ENCODE measurements at regions of chr4 and their contacts with region 1.

Region 1: DNA sequence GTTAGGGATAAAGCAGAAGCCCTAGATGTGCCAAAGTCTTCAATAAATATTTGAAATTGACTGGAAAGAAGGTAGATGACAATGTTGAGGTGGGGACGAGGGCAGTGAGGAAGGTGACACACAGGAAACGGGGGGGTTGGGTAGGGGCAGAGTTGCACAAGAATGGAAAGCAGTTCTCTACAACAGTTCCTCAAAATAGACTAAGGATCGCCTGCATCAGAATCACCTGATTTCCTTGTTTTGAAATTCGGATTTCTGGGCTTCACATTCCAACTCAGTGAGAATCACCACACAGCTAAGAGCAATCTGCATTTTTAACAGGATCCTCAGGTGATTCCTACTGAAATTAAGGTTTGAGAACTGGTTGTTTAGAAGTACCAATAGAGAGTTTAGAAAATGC is 70.6 kb downstream of the ARFIP1 start:
- DNase-seq: peak in 1 of 2 experiments; percentile 63
- H3K4me3 ChIP-seq: peak overlapping the region in 1 of 4 experiments; percentile 32; a peak in 1 of 8 replicates
- H3K27ac ChIP-seq: peak overlapping the region; percentile 59; the same call in 1 of the 2 replicates
- H3K4me1 ChIP-seq: peaks cover 7 to 17% (median 10%) of the 10 kb centered on the region in 4 experiments; a peak in 6 of 7 replicates
- H3K27me3 ChIP-seq: no peaks in the 10 kb centered on the region
- CTCF ChIP-seq: no peak
- EP300 ChIP-seq: peak in 1 of 2 experiments; percentile 57; a peak in 1 of 3 replicates
- POLR2A ChIP-seq: peak in 1 of 2 experiments; percentile 53; a peak in 1 of 3 replicates
- RAD21 ChIP-seq: no peak

Region 2: DNA sequence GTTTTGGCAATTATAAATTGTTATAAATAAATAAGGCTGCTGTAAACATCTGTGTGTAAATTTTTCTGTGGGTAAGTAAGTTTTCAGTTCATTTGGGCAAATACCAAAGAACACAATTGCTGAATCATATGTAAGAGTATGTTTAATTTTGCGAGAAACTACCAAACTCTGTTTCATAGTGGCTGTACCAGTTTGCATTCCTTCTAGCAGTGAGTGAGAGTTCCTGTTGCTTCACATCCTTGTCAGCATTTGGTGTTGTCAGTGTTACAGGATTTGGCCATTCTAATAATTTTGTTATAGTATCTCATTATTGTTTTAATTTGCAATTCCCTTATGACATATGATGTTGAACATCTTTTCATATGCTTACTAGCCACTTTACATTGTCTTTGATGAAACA is 22.3 kb before region 1 on chr4:
- CTCF ChIA-PET with region 1: no interaction called
- POLR2A ChIA-PET with region 1: no interaction called
- DNase-seq: no peak
- H3K4me3 ChIP-seq: no peak overlapping the region
- H3K27ac ChIP-seq: no peak overlapping the region
- H3K4me1 ChIP-seq: no peaks in the 10 kb centered on the region
- H3K27me3 ChIP-seq: no peaks in the 10 kb centered on the region
- CTCF ChIP-seq: no peak
- EP300 ChIP-seq: no peak
- POLR2A ChIP-seq: no peak
- RAD21 ChIP-seq: no peak

Region 3: GRCh38 chr4:152972821-152973628 is 122.6 kb after region 1 on chr4:
- CTCF ChIA-PET with region 1: interaction called, 11 read pairs
- POLR2A ChIA-PET with region 1: no interaction called
- DNase-seq: no peak
- H3K4me3 ChIP-seq: no peak overlapping the region
- H3K27ac ChIP-seq: no peak overlapping the region
- H3K4me1 ChIP-seq: no peaks in the 10 kb centered on the region
- H3K27me3 ChIP-seq: no peaks in the 10 kb centered on the region
- CTCF ChIP-seq: no peak
- EP300 ChIP-seq: no peak
- POLR2A ChIP-seq: no peak
- RAD21 ChIP-seq: no peak

Measured in H1 (cell line).